GM13976 (cell line): ENCODE measurements at regions of chr17 and their contacts with region 1.

Region 1: DNA sequence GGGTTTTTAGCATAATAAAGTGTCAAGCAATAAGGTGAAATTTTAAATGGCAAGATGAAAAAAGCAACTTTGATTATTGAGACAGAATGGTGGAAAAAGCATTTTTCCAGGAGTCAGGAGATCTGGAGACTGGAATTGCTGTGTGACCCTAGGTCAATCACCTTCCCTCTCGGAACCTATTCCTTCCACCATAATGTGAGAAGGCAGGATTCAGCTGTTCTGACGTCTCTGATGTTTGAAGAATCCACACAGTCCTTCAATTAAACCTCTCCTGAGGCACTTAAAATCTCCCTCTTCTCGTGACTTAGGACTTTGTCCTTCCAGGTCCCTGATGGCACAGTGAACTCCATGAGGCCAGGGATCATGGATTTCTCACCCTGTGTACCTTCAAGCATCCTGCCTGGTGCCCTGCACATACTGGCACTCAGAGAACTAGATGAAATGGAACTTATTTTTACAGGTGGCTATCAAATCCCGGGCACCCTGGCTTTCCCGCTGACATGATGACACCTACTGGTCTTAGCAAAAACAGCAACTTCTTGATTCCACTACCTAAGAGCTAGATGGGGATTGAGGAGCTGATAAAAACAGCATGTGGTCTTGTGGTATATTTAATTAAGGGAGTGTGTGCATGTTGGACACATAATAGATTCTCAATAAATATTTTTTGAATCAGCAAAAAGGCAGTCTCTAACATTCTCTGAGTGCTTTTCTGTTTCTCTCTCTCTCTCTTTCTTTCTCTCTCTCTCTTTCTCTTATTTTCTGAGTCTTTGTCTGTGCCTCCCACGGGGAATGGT is 2.3 kb upstream of the CCDC182 start:
- DNase-seq: peak; percentile 71
- CTCF ChIP-seq: peak; percentile 63

Region 2: DNA sequence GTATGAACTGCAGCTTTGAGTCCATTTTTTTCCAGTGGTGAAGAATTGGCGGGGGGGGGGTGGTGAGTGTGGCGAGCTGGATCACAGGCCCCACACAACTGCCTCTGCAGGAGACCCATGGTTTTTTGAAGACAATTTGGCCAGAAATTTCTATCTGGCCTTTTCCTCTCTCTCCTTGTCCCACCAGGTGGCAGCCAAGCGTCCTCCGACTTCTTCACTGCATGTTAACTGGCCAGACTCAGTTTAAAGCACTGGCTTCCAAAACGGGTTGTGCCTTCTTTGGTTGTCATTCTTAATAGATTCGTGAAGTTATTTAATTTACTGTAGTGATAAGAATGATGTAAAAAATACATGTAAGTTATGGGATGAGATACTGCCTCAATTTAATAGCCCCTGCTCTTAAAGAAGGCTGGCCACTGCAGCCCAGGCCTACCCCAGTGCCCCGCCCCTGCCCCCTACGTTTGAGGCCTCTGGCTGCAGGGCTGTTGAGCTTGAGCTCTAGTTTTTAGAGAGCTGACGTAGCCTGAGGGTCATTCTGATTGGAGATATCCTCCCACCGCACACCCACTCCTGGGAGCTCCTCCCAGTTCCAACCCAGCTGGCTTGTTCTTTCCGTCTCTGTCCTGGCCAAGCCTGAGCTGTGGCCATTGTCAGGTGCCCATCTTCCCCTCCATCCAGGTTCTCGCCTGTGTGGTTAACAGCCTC is 625.9 kb before region 1 on chr17:
- in situ Hi-C with region 1: loop called (anchors 10 kb)
- DNase-seq: peak; percentile 44
- CTCF ChIP-seq: peak; percentile 7

Region 3: DNA sequence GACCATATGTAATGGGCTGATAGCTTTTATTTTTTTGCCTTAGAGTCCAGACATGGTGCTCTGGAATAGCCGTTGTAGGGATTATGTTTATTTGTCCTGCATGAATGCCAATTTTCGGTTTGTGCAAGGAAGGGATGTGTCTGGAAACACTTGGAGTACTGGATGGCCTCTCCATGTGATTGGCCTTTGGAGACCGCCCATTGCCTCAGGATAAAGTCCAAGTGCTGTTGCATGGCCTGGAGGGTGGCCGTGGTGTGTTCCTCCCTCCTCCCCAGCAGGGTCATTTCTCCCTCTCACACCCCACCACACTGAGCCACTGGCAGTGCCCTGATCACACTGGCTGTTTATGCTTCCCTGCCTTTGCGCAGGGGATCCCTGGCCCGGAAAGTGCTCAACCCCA is 397.1 kb before region 1 on chr17:
- in situ Hi-C with region 1: no loop called
- DNase-seq: no peak
- CTCF ChIP-seq: no peak

Region 4: DNA sequence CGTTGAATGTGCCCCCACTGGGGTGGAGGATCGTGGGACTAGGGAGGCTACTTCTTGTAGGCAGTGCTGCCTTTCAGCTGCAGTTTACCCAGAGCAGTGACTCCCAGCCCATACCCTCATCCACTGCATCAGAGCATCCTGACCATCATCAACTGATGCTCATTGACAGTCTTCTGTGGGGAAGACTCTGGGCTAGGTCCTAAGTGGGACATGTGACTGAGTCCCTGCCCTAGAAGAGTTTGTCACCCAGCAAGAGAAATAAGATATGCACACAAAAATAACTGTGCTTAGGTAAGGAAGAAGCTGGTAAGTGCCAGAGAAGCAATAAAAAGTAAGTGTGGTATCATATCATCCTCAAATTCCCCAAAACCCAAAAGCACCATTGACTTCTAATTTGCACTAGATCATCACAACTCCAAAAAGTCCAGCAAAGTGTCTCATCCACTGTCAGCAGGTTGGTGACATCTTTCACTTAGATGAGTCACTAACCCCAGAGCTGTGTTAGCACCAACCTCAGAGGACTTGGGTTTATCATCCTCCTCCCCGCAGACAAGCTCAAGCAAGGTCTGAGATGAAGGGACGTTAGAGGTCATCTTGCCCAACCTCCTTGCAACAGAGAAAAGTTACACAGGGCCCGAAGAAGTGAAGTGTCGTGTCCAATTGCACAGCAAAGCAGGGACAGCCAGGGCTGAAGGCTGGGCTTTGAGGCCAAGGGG is 101.3 kb before region 1 on chr17:
- in situ Hi-C with region 1: no loop called
- DNase-seq: no peak
- CTCF ChIP-seq: no peak

Region 5: GRCh38 chr17:57892146-57892828 is 144.9 kb after region 1 on chr17:
- in situ Hi-C with region 1: no loop called
- DNase-seq: peak; percentile 89
- CTCF ChIP-seq: peak; percentile 97